Left colon (tissue), 2 donors: ENCODE measurements at regions of chr17 and their contacts with region 1.

Region 1: DNA sequence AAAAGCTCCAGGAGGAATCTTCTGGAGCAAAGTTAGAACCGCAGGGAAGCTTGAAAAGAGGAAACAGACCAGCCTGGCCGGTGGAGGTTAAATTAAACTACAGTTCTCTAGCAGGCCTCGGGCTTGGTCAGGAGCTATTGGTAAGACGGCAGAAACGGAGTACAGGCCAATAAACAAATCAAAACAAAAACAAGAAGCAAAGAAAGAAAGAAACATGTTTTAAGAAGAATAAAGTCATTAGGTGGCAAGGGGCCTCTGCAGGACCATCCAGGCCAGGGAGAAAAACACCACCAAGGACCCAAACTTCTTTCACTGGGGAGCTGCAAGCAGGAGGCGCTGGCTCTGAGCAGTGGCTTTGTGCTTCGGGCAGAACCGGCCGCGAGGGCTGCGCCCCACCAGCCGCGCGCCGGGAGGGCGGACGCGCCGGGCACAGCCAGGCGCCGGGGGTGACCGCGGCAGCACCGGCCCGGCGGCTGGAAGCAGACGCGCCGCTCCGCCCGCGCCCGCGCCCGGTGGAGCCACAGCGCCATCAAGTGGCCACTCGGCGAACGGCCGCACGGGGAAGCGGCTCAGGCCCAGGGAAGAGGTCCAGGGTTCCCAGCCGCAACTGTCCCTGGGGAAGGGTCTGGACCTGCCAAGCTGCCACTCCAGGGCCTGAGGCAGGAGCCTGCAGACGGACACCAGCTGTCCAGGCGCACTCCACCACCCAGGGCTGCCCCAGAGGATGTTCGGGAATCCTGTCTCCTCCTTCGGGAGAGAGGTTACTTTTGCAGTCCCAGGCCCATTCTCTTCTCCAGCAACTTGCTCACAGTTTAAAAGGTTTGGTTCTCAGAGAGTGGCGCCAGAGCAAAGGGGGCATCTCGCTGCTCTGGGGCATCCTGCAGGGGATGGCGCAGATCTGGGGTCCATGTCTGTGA is 419.4 kb downstream of the SOX9 start:
- DNase-seq: peak in 1 of 2 donors; percentile 73
- ATAC-seq: peak; percentile 86

Region 2: GRCh38 chr17:70644096-70644495 is 1896.1 kb before region 1 on chr17:
- intact Hi-C with region 1: loop called in 1 of 2 experiments (anchors 10 kb)
- DNase-seq: no peak
- ATAC-seq: peak; percentile 64

Region 3: GRCh38 chr17:70767102-70767701 is 1773.0 kb before region 1 on chr17:
- intact Hi-C with region 1: loop called in 1 of 2 experiments (anchors 10 kb)
- DNase-seq: no peak
- ATAC-seq: no peak

Region 4: DNA sequence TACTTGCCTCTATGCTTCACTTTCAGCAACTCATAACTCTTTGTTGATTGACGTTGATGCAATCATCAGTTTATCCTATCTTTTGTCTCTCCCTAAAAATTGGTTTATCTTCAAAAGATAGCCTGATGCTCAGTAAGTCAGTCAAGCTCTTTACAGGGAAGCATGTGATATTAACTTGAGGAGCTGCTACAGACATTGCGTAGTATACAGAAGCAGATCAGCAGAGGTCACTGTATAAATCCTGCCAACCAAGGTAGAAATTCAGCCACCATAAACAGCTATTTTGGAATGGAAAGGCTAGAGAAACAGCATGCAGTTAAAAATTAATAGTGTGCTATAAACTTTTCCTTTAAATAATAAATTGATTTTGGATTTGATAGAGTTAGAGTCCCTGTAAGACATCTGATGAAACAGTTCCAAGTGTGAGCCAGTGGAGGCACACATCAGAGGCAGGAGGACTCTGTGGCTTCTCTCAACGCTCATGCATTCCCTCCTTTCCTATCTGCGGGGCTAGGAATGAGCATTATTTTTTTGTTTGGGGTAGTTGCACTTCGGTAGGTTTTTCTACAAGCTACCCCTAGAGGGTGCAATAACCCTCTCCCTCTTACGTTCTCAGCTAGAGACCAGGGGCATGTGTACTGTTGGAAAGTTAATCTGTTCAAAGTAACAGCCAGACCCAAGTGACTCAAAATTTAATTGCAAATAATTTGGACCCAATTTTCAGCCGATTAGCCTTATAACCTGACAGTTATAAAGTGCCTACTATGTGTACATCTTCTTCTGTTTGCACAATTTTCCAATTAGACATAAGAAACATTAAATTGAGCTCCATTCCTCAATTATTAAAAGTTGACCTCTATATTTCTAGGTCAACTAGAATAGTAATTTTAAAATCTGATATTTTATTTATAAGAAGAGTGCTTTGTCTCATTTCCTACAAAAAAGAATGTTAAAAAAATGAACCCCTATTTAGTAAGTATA is 1067.1 kb before region 1 on chr17:
- intact Hi-C with region 1: loop called in 1 of 2 experiments (anchors 10 kb)
- DNase-seq: no peak
- ATAC-seq: peak; percentile 93

Region 5: DNA sequence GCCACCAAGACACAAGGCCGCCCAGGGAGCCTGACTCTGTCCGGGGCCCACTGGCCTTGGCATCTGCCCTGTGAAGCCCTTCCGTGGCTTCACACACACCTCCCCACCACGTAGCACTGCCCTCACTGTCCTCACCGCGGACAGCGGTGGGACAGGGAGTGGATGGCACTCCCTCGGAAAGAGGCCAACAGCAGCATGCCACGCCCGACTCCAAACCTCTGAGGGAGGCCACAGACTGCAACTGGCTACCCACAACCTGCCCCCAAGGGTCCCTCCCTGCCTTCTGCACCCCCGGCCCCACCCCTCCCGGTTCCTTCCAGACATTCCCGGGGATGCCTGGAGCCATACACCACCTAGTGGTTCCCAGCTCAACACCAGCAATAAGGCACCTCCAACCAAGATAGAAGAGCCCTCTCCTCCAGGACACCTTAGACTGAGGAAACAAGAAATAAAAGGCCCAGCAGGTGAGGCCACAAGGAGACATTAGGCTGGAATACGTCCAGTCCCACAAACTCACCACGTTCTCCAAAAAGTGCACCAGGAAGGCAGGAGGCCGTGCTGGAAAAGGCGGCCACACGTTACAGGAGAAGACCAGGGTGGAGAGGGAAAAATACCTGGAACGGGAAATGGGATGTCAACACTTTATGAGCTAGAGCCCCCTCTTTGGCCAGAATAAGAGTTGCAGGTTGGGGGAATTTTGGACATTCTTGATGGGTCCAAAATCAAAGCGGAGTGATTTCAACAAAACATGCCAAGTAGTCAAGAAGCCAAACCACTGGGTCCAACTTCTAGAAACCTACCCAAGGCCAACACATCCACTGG is 109.4 kb before region 1 on chr17:
- intact Hi-C with region 1: no loop called
- DNase-seq: peak; percentile 69 to 78
- ATAC-seq: peak; percentile 48